Heart left ventricle (tissue), 16 donors: ENCODE measurements at regions of chrX and their contacts with region 1.

Region 1: DNA sequence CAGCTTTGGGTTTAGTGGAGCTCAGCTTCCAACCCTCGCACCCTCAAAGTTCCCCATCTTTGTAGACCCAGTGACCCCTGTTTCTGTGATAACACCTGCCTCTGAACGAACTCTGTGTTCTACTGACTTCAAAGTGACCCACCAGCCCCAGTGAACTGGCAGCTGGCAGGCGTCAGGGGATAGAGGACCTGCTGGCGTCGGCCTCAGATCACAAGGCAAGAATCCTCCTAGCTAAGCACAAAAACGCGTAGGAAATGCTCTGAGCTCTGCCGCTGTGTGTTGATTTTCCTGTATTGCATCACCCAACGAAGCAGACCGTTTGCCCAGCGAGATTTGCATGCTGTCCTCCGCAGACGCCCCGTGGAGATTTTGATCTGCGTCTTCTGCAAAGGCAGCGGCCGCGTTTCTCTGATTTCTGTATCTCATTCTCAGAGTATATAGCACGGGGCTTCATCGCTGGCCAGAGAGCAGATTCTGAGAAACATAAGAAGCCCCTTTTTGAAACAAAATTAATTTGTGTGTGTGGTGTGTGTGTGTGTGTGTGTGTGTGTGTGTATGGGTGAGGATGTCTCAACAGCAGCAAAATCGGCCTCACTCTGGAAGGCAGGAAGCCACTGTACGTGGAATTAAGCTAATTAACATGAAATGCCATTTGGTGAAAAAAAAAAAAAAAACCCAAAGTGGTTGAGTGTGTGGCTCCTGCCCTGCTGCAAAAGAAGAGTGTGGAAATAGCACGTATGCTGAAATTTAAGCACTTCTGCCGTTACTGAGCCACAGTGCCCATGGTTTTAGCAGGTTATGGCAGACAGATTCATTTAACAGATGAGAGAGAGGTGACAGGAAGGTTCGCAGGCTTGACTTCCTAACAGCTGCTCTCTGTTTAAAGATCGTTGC is 29.2 kb upstream of the ASMTL start:
- DNase-seq: peak; percentile 59 to 77 (median 68)
- ATAC-seq: peak; percentile 78 to 87 (median 84)
- H3K4me3 ChIP-seq: peak overlapping the region in 4 of 12 donors; percentile 12 to 21 (median 15)
- H3K27ac ChIP-seq: peak overlapping the region; percentile 9 to 91 (median 62)
- H3K4me1 ChIP-seq: peaks cover 0 to 53% (median 4%) of the 10 kb centered on the region in 12 donors
- H3K27me3 ChIP-seq: peaks cover 0 to 11% (median 0%) of the 10 kb centered on the region in 9 donors
- CTCF ChIP-seq: peak in 1 of 12 donors; percentile 10
- POLR2A ChIP-seq: no peak

Region 2: GRCh38 chrX:1462596-1463251 is 19.2 kb before region 1 on chrX:
- intact Hi-C with region 1: loop called in 3 of 10 experiments (anchors 2 kb)
- DNase-seq: peak in 4 of 5 donors; percentile 43 to 58 (median 54)
- ATAC-seq: peak; percentile 57 to 94 (median 88)
- H3K4me3 ChIP-seq: no peak overlapping the region
- H3K27ac ChIP-seq: peak overlapping the region; percentile 17 to 94 (median 74)
- H3K4me1 ChIP-seq: peaks cover 0 to 50% (median under 1%) of the 10 kb centered on the region in 12 donors
- H3K27me3 ChIP-seq: peaks cover 0 to 8% (median 2%) of the 10 kb centered on the region in 9 donors
- CTCF ChIP-seq: no peak
- POLR2A ChIP-seq: no peak

Region 3: GRCh38 chrX:1500701-1501624 is 19.1 kb after region 1 on chrX:
- intact Hi-C with region 1: loop called in 1 of 10 experiments (anchors 2 kb)
- DNase-seq: no peak
- ATAC-seq: peak; percentile 59 to 67 (median 62)
- H3K4me3 ChIP-seq: peak overlapping the region in 8 of 12 donors; percentile 6 to 39 (median 19)
- H3K27ac ChIP-seq: peak overlapping the region; percentile 12 to 88 (median 76)
- H3K4me1 ChIP-seq: peaks cover 0 to 48% (median 2%) of the 10 kb centered on the region in 12 donors
- H3K27me3 ChIP-seq: no peaks in the 10 kb centered on the region
- CTCF ChIP-seq: no peak
- POLR2A ChIP-seq: no peak

Region 4: GRCh38 chrX:1537035-1537715 is 55.3 kb after region 1 on chrX and contains the start of gene P2RY8:
- intact Hi-C with region 1: loop called in 2 of 10 experiments (anchors 2 to 10 kb)
- DNase-seq: peak; percentile 49 to 85 (median 61)
- ATAC-seq: peak; percentile 58 to 85 (median 74)
- H3K4me3 ChIP-seq: peak within 1 kb of the TSS; percentile 4 to 69 (median 51)
- H3K27ac ChIP-seq: peak within 1 kb of the TSS in 10 of 12 donors; percentile 50 to 95 (median 70)
- H3K4me1 ChIP-seq: peaks cover 0 to 17% (median 0%) of the 10 kb centered on the region in 12 donors
- H3K27me3 ChIP-seq: peaks cover 0 to 6% (median 0%) of the 10 kb centered on the region in 9 donors
- CTCF ChIP-seq: no peak
- POLR2A ChIP-seq: no peak
- total RNA-seq, gene P2RY8: 0.62 to 10.5 (median 2.3) TPM

Region 5: GRCh38 chrX:1546691-1547251 is 64.9 kb after region 1 on chrX:
- intact Hi-C with region 1: loop called in 1 of 10 experiments (anchors 10 kb)
- DNase-seq: peak in 3 of 5 donors; percentile 35 to 66 (median 61)
- ATAC-seq: peak in 3 of 4 donors; percentile 38 to 97 (median 48)
- H3K4me3 ChIP-seq: peak overlapping the region in 1 of 12 donors; percentile 5
- H3K27ac ChIP-seq: peak overlapping the region; percentile 10 to 90 (median 68)
- H3K4me1 ChIP-seq: peaks cover 0 to 11% (median 5%) of the 10 kb centered on the region in 12 donors
- H3K27me3 ChIP-seq: no peaks in the 10 kb centered on the region
- CTCF ChIP-seq: no peak
- POLR2A ChIP-seq: no peak